ENCODE measurements at regions of chr9 and their contacts with region 1.

Region 1: DNA sequence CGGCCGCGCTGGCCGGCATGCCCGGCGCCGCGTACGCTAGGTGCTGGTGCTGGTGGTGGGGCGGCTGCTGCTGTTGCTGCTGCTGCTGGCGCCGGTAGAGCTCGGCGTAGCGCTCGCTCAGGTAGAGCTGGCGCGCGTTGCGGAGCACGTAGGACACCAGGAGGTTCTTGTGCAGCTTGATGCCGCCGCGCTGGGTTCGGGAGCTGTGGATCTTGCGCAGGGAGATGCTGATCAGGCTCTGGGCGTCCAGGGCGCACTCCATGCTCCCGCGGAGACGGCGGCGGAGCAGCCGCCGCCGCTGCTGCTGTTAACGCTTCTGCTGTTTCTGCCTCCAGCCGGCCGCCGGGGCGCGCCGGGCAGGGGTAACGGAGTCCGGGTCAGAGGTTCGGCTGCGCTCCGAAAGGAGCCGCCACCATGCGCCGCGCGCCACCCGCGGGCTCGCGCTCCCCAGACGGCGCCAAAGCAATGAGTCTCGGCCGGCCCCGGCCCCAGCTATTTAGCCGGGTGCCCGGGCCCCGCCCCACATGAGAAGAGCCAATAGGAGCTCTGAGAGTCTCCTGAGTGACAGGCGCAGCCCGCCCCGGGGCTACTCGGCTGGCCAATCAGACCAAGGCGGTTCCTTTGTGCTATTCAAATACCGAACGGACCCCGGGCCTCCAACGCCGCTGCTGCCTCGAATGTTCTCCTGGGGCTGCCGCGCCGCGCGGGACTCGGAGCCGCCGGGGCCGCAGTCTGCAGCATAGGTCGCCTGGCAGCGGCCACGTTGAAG is at the start of gene IER5L:
- DNase-seq: peak; percentile 95
- ATAC-seq: peak; percentile 87
- H3K4me3 ChIP-seq: peak within 1 kb of the TSS; percentile 48 to 94 (median 69)
- H3K4me3 Mint-ChIP-seq: peak within 1 kb of the TSS; percentile 93
- H3K27ac ChIP-seq: no peak within 1 kb of the TSS
- H3K27ac Mint-ChIP-seq: peak within 1 kb of the TSS; percentile 74
- H3K4me1 ChIP-seq: peaks cover 22 to 34% of the 10 kb centered on the region in 2 donors
- H3K4me1 Mint-ChIP-seq: peaks cover 22% of the 10 kb centered on the region
- H3K27me3 ChIP-seq: peaks cover 0 to 27% (median 15%) of the 10 kb centered on the region in 4 experiments
- H3K27me3 Mint-ChIP-seq: peaks cover 14% of the 10 kb centered on the region
- CTCF ChIP-seq: no peak
- total RNA-seq, gene IER5L: 12.9 and 13.2 TPM in 2 replicates

Region 2: DNA sequence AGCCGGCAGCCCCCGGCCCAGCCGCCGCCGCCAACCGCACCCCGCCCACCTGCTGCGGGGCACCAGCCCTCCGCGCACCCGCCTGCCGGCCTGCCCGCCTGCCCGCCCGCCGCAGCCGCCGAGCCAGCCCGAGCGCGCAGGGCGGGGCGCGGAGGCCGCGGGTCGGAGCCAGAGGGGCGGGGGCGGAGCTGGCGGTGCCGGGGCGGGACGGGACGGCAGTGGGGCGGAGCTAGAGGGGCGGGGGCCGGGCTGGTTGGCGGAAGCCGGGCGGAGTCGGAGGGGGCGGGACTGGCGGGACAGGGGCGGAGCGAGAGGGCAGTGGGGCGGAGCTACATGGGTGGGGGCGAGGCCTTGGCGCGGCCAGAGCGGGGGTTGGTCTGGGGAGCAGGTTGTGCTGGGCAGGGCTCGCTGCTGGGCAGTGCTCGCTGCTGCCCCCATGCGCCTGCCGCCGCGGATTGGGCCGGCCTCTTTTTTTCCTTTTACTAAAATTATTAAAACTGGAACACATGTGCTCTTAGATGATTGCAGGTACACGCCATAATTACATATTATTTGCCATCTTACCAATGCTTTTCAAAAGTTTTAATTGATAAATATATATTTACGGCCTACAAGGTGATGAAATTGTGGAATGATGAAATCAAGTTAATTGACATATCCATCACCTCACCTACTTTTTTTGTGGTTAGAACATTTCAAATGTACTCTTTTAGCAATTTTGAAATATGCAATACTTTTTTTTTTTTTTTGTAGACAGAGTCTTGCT is 149.6 kb before region 1 on chr9 and contains the start of gene SH3GLB2:
- CTCF ChIA-PET with region 1: no interaction called
- POLR2A ChIA-PET with region 1: interaction called, 3 read pairs
- intact Hi-C with region 1: loop called (anchors 2 kb)
- DNase-seq: peak; percentile 93
- ATAC-seq: peak; percentile 96
- H3K4me3 ChIP-seq: peak within 1 kb of the TSS; percentile 11 to 76 (median 63)
- H3K4me3 Mint-ChIP-seq: peak within 1 kb of the TSS; percentile 89
- H3K27ac ChIP-seq: peak within 1 kb of the TSS in 1 of 2 donors; percentile 70
- H3K27ac Mint-ChIP-seq: peak within 1 kb of the TSS; percentile 84
- H3K4me1 ChIP-seq: peaks cover 11 to 16% of the 10 kb centered on the region in 2 donors
- H3K4me1 Mint-ChIP-seq: peaks cover 19% of the 10 kb centered on the region
- H3K27me3 ChIP-seq: no peaks in the 10 kb centered on the region
- H3K27me3 Mint-ChIP-seq: no peaks in the 10 kb centered on the region
- CTCF ChIP-seq: peak; percentile 21
- total RNA-seq, gene SH3GLB2: 110 and 111 TPM in 2 replicates

Region 3: DNA sequence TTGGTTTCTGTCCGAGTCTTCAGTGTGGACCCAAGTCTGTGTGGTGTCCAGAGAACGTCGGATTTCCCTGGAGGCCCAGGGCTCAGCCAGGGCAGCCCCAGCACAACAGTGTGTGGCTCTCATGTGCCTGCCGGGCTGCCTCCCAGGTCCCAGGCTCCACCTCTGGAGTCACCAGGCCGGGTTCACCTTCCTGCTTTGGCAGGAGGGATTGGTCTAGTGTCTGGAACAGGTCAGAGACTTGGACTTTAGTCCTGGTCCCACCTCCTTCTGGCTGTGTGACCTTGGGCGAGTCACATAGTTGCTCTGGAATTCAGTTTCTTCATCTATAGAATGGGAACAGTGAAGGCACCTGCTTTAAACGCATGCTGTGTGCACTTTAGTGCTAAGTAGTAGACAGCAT is 93.9 kb before region 1 on chr9:
- CTCF ChIA-PET with region 1: no interaction called
- POLR2A ChIA-PET with region 1: no interaction called
- intact Hi-C with region 1: no loop called
- DNase-seq: no peak
- ATAC-seq: no peak
- H3K4me3 ChIP-seq: no peak overlapping the region
- H3K4me3 Mint-ChIP-seq: no peak overlapping the region
- H3K27ac ChIP-seq: no peak overlapping the region
- H3K27ac Mint-ChIP-seq: no peak overlapping the region
- H3K4me1 ChIP-seq: peaks cover 16 to 20% of the 10 kb centered on the region in 2 donors
- H3K4me1 Mint-ChIP-seq: peaks cover 23% of the 10 kb centered on the region
- H3K27me3 ChIP-seq: no peaks in the 10 kb centered on the region
- H3K27me3 Mint-ChIP-seq: no peaks in the 10 kb centered on the region
- CTCF ChIP-seq: no peak

Region 4: GRCh38 chr9:129148463-129149204 is 29.3 kb before region 1 on chr9:
- CTCF ChIA-PET with region 1: interaction called, 382 read pairs
- POLR2A ChIA-PET with region 1: no interaction called
- intact Hi-C with region 1: no loop called
- DNase-seq: no peak
- ATAC-seq: no peak
- H3K4me3 ChIP-seq: no peak overlapping the region
- H3K4me3 Mint-ChIP-seq: no peak overlapping the region
- H3K27ac ChIP-seq: peak overlapping the region in 1 of 2 donors; percentile 36
- H3K27ac Mint-ChIP-seq: peak overlapping the region; percentile 54
- H3K4me1 ChIP-seq: peaks cover 13 to 18% of the 10 kb centered on the region in 2 donors
- H3K4me1 Mint-ChIP-seq: peaks cover 17% of the 10 kb centered on the region
- H3K27me3 ChIP-seq: no peaks in the 10 kb centered on the region
- H3K27me3 Mint-ChIP-seq: no peaks in the 10 kb centered on the region
- CTCF ChIP-seq: no peak

Region 5: GRCh38 chr9:129270903-129271431 is 93.0 kb after region 1 on chr9:
- CTCF ChIA-PET with region 1: no interaction called
- POLR2A ChIA-PET with region 1: no interaction called
- intact Hi-C with region 1: no loop called
- DNase-seq: no peak
- ATAC-seq: no peak
- H3K4me3 ChIP-seq: peak overlapping the region in 4 of 5 experiments; percentile 7 to 38 (median 23)
- H3K4me3 Mint-ChIP-seq: peak overlapping the region; percentile 41
- H3K27ac ChIP-seq: peak overlapping the region; percentile 52
- H3K27ac Mint-ChIP-seq: no peak overlapping the region
- H3K4me1 ChIP-seq: peaks cover 21 to 22% of the 10 kb centered on the region in 2 donors
- H3K4me1 Mint-ChIP-seq: peaks cover 21% of the 10 kb centered on the region
- H3K27me3 ChIP-seq: peaks cover 0 to 24% (median 7%) of the 10 kb centered on the region in 4 experiments
- H3K27me3 Mint-ChIP-seq: peaks cover 58% of the 10 kb centered on the region
- CTCF ChIP-seq: no peak

Region 6: GRCh38 chr9:129383561-129384416 is 205.8 kb after region 1 on chr9:
- CTCF ChIA-PET with region 1: interaction called, 4 read pairs
- POLR2A ChIA-PET with region 1: interaction called, 8 read pairs
- intact Hi-C with region 1: loop called (anchors 10 kb)
- DNase-seq: peak; percentile 94
- ATAC-seq: peak; percentile 88
- H3K4me3 ChIP-seq: peak overlapping the region; percentile 12 to 82 (median 68)
- H3K4me3 Mint-ChIP-seq: peak overlapping the region; percentile 86
- H3K27ac ChIP-seq: peak overlapping the region; percentile 90 to 96
- H3K27ac Mint-ChIP-seq: peak overlapping the region; percentile 97
- H3K4me1 ChIP-seq: peaks cover 17 to 26% of the 10 kb centered on the region in 2 donors
- H3K4me1 Mint-ChIP-seq: peaks cover 21% of the 10 kb centered on the region
- H3K27me3 ChIP-seq: peaks cover 0 to 7% (median 0%) of the 10 kb centered on the region in 4 experiments
- H3K27me3 Mint-ChIP-seq: peaks cover 3% of the 10 kb centered on the region
- CTCF ChIP-seq: no peak

Region 7: DNA sequence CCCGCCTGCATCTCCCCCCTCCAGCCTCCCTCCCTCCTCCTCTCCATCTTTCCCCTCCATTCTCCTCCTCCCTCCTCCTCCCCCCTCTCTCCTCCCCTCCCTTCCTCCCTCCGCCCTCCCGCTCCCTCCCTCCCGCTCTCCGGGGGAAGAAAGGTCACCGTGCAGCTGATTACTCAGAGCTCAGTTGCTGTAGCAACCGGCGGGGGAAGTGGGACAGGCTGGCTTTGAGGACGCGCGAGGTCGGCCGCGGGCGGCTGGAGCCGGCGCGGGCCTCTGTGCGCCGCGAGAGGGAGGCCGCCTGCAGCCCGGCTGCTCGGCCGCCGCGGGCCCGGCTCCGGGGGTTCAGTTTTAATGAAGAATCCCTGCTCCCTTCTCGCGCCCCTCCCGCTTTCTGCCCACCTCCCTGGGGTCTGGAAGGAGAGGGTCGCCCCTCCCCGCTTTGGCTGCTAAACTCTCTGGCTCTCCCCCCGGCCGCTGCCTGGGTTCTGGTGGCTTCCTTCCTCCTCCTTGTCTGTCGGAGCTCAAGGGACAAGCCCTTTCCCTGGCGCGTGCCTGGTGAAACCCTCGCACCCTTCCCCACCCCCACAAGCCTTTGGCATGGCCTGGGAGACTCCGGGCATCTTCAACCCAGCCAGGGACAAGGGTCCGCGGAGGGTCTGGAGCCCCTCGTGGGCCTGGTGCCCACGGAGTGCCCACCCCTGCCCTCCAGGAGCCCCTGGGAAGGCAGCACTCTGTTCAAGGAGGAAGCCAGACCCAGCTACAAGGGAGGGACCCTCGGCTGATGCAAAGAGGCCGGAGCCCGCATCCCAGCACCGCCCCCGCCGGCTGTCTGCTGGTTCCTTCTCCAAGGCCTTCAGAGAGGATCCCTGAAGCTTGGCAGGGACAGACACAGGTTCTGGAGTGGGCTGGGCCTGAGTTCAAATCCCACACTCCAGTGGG is 282.6 kb after region 1 on chr9:
- CTCF ChIA-PET with region 1: interaction called, 16 read pairs
- POLR2A ChIA-PET with region 1: interaction called, 3 read pairs
- intact Hi-C with region 1: no loop called
- DNase-seq: peak; percentile 84
- ATAC-seq: peak; percentile 73
- H3K4me3 ChIP-seq: peak overlapping the region in 4 of 5 experiments; percentile 43 to 61 (median 49)
- H3K4me3 Mint-ChIP-seq: peak overlapping the region; percentile 86
- H3K27ac ChIP-seq: peak overlapping the region; percentile 34 to 66
- H3K27ac Mint-ChIP-seq: peak overlapping the region; percentile 90
- H3K4me1 ChIP-seq: peaks cover 33 to 35% of the 10 kb centered on the region in 2 donors
- H3K4me1 Mint-ChIP-seq: peaks cover 27% of the 10 kb centered on the region
- H3K27me3 ChIP-seq: peaks cover 0 to 10% (median 3%) of the 10 kb centered on the region in 4 experiments
- H3K27me3 Mint-ChIP-seq: no peaks in the 10 kb centered on the region
- CTCF ChIP-seq: no peak

Region 8: DNA sequence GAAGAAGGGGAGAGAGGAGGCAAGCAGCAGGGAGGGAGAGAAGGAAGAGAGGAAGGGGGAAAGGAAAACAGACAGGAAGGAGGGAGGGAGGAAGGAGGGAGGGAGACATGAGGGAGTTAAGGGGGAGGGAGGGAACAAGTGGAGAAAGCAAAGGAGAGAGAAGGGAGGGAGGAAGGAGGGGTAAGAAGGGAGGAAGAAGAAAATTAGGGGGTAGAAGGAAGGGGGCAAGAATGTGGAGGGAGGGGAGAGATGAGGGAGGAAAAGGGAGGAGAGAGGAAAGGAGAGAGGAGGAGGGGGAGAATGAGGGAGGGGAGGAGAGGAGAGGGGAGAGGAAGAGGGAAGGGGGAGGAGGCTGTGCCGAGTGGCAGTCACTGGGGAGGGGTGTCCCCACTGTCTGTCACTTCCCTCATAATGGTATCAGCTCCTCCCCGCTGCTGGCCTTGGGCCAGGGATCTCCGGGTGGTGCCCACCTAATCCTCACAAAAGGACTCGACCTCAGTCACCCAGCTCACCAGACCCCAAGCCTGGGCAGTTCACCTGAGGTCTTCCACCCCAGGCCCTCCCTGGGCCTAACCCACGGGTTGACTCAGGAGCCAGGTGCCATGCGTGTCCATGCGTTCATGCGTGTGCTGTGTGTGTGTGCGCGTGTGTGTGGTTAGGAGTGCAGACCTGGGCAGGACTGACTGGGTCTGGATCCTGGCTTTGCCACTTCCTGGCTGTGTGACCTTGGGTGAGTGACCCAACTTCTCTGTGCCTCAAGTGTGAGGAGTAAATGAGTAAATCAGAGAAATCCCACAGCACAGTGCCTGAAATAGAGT is 424.8 kb after region 1 on chr9:
- CTCF ChIA-PET with region 1: interaction called, 19 read pairs
- POLR2A ChIA-PET with region 1: no interaction called
- intact Hi-C with region 1: no loop called
- DNase-seq: peak; percentile 19
- ATAC-seq: no peak
- H3K4me3 ChIP-seq: no peak overlapping the region
- H3K4me3 Mint-ChIP-seq: no peak overlapping the region
- H3K27ac ChIP-seq: no peak overlapping the region
- H3K27ac Mint-ChIP-seq: no peak overlapping the region
- H3K4me1 ChIP-seq: peaks cover 13% of the 10 kb centered on the region in 2 donors
- H3K4me1 Mint-ChIP-seq: peaks cover 18% of the 10 kb centered on the region
- H3K27me3 ChIP-seq: peaks cover 0 to 16% (median 5%) of the 10 kb centered on the region in 4 experiments
- H3K27me3 Mint-ChIP-seq: peaks cover 25% of the 10 kb centered on the region
- CTCF ChIP-seq: no peak

Region 9: GRCh38 chr9:129626079-129626624 is 448.2 kb after region 1 on chr9 and contains the start of gene NTMT1:
- CTCF ChIA-PET with region 1: interaction called, 42 read pairs
- POLR2A ChIA-PET with region 1: interaction called, 3 read pairs
- intact Hi-C with region 1: loop called (anchors 1 kb)
- DNase-seq: peak; percentile 96
- ATAC-seq: peak; percentile 83
- H3K4me3 ChIP-seq: peak within 1 kb of the TSS; percentile 51 to 89 (median 88)
- H3K4me3 Mint-ChIP-seq: peak within 1 kb of the TSS; percentile 84
- H3K27ac ChIP-seq: peak within 1 kb of the TSS; percentile 70 to 99
- H3K27ac Mint-ChIP-seq: peak within 1 kb of the TSS; percentile 83
- H3K4me1 ChIP-seq: peaks cover 29 to 34% of the 10 kb centered on the region in 2 donors
- H3K4me1 Mint-ChIP-seq: peaks cover 50% of the 10 kb centered on the region
- H3K27me3 ChIP-seq: peaks cover 0 to 9% (median 3%) of the 10 kb centered on the region in 4 experiments
- H3K27me3 Mint-ChIP-seq: peaks cover 12% of the 10 kb centered on the region
- CTCF ChIP-seq: no peak
- total RNA-seq, gene NTMT1: 33.6 and 35.3 TPM in 2 replicates